Mammary epithelial cell (primary cell): ENCODE measurements at regions of chr6 and their contacts with region 1.

Region 1: DNA sequence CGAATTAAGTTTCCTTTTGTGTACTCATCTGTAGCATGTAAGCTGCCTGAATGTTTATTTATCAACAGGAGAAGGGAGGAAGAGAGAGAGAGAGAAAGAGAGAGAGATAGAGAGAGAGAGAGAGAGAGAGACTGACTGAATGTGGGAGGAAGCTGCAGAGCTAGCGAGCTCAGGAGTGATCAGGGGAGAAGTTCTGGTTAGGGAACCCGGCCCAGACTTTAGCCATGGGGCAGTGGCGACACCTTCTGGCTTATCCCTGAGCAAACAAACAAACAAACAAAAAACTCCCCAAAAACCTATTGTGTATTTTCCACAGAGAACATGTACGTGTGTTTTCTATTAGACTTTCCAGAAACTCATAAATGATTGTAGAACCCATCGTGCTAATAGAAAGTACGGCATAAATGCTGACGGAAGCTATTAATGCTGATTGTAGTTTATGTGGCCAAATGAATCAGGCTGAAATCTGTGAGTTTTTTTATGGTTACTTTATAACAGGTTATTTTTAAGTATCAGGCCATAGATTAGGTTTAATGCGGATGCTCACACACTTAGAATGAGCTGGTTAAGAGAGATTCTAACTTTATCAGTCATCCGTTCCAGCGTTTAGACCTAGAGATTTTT is 92.8 kb downstream of the CLIC5 start:
- DNase-seq: peak; percentile 29
- H3K4me3 ChIP-seq: no peak overlapping the region
- H3K27ac ChIP-seq: no peak overlapping the region
- H3K4me1 ChIP-seq: no peaks in the 10 kb centered on the region
- H3K27me3 ChIP-seq: no peaks in the 10 kb centered on the region
- CTCF ChIP-seq: peak; percentile 53 to 90

Region 2: GRCh38 chr6:44475779-44476434 is 1446.9 kb before region 1 on chr6:
- CTCF ChIA-PET with region 1: interaction called, 4 read pairs
- dilution Hi-C with region 1: no loop called
- in situ Hi-C with region 1: loop called in 1 of 2 experiments (anchors 5 kb)
- intact Hi-C with region 1: loop called (anchors 1 kb)
- DNase-seq: peak; percentile 70
- H3K4me3 ChIP-seq: no peak overlapping the region
- H3K27ac ChIP-seq: no peak overlapping the region
- H3K4me1 ChIP-seq: peaks cover 15% of the 10 kb centered on the region
- H3K27me3 ChIP-seq: no peaks in the 10 kb centered on the region
- CTCF ChIP-seq: peak; percentile 89 to 97

Region 3: DNA sequence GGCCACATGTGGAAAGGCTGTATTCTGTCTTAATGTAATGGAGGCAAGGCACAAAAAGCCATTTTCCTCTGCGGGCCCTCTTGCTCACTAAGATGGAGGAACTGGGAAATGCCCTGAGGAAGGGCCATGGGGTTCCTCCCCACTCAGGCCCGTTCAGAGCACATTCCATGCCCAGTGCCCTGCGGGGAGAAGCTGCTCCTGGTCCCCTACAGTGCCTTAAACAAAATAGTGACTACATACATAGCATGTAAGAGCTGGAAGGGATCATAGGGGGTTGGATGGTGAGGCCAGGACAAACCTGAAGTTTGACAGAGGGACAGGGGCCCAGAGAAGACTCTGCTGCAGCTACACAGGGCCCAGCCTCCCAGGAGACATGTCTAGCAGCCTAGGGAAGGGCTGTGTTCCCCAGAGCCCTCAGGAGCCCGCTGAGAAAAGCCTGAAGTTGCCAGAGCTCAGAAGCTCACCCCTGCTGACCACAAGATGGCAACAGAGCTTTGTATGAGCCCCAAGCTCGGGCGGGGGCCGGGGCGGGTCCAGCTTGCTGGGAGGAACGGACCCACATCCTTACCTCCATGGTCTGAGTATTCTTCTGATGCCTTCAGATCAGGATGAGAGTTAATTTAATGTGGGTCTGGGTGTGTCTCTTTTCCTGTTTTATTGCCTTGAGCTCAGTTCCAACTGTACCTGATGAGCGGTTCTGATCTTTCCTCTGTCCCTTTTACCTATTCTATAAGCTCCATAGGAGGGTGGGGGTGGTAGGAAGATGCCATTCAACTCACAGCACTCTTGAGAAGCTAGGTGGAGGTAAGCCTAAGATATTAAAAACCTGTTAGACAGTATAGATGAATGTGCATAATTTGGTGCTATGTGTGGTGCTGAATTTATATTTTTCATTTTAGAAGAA is 1292.5 kb before region 1 on chr6:
- CTCF ChIA-PET with region 1: interaction called, 9 read pairs
- dilution Hi-C with region 1: no loop called
- in situ Hi-C with region 1: no loop called
- intact Hi-C with region 1: loop called (anchors 1 kb)
- DNase-seq: peak; percentile 33
- H3K4me3 ChIP-seq: no peak overlapping the region
- H3K27ac ChIP-seq: no peak overlapping the region
- H3K4me1 ChIP-seq: no peaks in the 10 kb centered on the region
- H3K27me3 ChIP-seq: no peaks in the 10 kb centered on the region
- CTCF ChIP-seq: peak; percentile 46 to 74

Region 4: GRCh38 chr6:44966449-44967092 is 956.3 kb before region 1 on chr6:
- CTCF ChIA-PET with region 1: no interaction called
- dilution Hi-C with region 1: no loop called
- in situ Hi-C with region 1: no loop called
- intact Hi-C with region 1: no loop called
- DNase-seq: peak; percentile 88
- H3K4me3 ChIP-seq: no peak overlapping the region
- H3K27ac ChIP-seq: peak overlapping the region; percentile 63
- H3K4me1 ChIP-seq: peaks cover 7% of the 10 kb centered on the region
- H3K27me3 ChIP-seq: no peaks in the 10 kb centered on the region
- CTCF ChIP-seq: no peak

Region 5: DNA sequence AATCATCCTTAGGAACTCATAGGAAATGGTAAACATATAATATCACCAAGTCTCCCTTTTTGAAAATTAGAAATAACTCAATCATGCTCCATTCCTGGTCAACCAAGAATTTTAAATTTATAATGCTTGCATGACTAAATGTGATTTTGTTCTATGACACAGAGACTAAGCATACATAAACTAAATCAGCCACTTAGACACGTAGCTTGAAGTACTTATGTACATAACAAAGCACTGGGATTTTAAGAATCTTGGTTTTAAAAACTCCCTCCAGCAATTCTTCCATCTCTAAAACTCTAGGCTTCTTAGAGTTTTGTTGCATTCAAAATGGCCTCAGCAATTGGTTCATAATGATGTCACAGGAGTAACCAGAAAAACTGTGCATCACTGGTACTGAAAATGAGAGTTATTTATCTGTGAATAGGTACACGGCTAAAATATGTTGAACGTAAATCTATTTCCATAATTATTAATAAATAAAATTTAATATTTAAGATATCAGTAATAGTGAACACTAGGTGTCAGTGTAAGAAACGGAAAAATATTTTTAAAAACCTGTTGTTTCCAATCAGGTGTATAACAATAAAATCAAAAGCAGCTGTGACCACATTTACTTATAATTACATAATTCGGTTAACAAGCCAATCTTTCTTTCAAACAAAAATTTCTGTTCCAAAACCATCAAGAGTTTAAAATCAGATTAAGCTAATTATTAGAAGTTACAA is 836.3 kb before region 1 on chr6:
- CTCF ChIA-PET with region 1: interaction called, 3 read pairs
- dilution Hi-C with region 1: no loop called
- in situ Hi-C with region 1: no loop called
- intact Hi-C with region 1: loop called (anchors 10 kb)
- DNase-seq: no peak
- H3K4me3 ChIP-seq: no peak overlapping the region
- H3K27ac ChIP-seq: no peak overlapping the region
- H3K4me1 ChIP-seq: no peaks in the 10 kb centered on the region
- H3K27me3 ChIP-seq: no peaks in the 10 kb centered on the region
- CTCF ChIP-seq: peak in 1 of 2 donors; percentile 6

Region 6: DNA sequence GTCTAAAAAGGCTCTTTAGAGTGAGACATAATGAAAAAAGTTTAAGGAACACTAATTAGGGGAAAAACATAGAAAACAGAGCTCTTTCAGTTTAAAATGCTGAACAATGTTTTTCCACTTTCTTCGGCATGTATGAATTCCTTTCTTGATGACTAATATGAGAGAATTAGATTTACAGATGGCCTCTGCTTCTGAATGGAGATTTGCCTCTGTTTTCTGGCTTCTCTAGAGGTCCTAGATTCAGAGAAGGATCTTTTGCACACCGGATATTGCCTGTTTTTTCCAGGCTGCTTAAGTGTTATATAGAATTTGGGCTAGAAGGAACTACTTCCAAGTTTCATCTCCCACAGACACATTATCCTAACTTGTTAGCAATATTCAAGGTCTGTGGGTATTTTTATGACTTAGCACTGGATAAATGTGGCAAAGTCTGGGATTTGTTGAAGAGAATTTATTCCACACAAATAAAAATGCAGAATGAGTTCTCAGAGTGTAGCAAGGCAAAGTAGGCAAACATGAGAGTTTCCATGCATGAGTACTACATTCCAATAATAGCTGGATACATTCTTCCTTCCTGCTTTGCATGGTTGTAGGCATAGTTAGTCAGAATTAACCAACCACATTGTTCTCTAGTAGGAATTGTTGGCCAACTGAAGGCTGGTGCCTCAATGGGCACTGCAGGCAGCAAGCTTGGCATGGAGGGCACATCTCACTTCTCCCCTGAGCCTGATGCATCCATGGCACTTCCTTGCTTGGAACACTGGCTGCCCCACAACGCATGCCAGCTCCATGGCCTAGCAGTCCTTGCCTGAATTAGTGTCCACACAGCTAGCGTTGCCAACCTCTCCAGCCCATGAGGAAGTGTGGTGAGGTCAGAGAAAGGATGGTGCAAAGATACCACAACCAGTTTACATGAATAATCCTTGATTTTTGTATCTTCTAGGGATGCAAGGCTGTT is 131.3 kb before region 1 on chr6:
- CTCF ChIA-PET with region 1: no interaction called
- dilution Hi-C with region 1: no loop called
- in situ Hi-C with region 1: no loop called
- intact Hi-C with region 1: loop called (anchors 1 kb)
- DNase-seq: peak; percentile 63
- H3K4me3 ChIP-seq: no peak overlapping the region
- H3K27ac ChIP-seq: peak overlapping the region; percentile 54
- H3K4me1 ChIP-seq: peaks cover 19% of the 10 kb centered on the region
- H3K27me3 ChIP-seq: no peaks in the 10 kb centered on the region
- CTCF ChIP-seq: no peak

Region 7: DNA sequence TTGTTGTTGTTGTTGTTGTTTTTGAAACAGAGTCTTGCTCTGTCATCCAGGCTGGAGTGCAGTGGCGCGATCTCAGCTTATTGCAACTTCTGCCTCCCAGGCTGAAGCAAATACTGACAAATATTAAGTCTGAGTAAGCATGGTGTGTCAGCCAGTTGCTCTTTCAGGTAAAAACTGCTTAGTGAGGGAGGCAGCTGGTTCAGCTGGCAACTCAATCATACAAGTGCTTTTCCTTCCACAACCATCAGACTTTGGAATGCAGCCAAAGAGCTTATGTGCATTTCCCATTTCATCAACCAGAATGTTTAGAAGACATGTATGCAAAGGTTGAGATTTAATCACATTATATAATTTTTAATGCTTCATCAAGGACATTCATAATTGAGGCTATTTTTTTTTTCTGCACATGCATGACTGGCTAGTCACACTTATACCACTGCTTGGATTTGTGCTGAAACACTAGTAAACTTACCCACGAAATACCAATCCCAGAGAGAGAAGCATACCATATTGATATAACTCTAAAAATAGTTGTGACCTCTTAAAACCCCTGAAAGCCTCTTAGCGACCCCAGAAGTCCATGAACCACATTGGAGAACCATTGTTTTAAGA is 36.8 kb after region 1 on chr6:
- CTCF ChIA-PET with region 1: no interaction called
- dilution Hi-C with region 1: no loop called
- in situ Hi-C with region 1: no loop called
- intact Hi-C with region 1: no loop called
- DNase-seq: peak; percentile 76
- H3K4me3 ChIP-seq: no peak overlapping the region
- H3K27ac ChIP-seq: no peak overlapping the region
- H3K4me1 ChIP-seq: no peaks in the 10 kb centered on the region
- H3K27me3 ChIP-seq: no peaks in the 10 kb centered on the region
- CTCF ChIP-seq: no peak